A673 (cell line): ENCODE measurements at regions of chr11 and their contacts with region 1.

Region 1: DNA sequence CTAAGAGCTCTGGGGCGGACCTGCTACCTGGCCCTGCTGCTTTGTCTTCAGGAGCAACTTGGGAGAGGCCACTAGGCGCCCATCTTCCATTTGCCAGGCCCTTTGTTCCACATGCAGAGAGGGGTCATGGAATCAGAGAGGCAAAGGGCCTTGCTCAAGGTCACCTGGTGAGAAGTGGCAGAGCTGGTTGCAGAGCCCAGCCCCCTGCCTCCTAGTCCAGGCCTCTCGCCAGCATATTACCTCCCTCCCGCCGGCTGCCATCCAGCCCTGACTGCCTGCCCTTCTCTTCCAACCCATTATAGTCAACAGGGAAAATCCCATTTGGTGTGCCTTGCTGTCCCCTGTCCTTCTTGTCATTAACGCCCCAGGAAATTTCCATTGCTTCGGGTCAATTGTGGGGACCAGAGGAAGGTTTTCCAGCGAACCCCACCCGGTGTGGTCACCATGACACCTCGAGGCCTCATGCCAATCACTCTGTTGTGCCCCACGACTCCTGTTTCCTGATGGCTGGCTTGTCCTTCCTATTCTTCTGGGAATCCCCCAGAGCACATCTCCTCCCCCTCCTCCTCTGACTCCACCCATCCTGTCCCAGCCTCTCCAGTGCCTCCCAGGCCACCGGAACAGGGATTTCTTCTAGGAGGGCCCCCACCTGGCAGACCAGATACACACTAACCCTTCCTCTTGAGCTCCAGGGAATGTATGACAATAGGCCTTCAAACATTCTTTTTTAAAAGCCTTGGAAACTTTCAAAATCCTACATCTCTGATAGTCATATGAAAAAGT is 77.0 kb downstream of the NECTIN1 start:
- DNase-seq: no peak
- H3K4me3 ChIP-seq: no peak overlapping the region
- H3K27ac ChIP-seq: no peak overlapping the region
- H3K4me1 ChIP-seq: no peaks in the 10 kb centered on the region
- H3K27me3 ChIP-seq: no peaks in the 10 kb centered on the region
- CTCF ChIP-seq: no peak

Region 2: DNA sequence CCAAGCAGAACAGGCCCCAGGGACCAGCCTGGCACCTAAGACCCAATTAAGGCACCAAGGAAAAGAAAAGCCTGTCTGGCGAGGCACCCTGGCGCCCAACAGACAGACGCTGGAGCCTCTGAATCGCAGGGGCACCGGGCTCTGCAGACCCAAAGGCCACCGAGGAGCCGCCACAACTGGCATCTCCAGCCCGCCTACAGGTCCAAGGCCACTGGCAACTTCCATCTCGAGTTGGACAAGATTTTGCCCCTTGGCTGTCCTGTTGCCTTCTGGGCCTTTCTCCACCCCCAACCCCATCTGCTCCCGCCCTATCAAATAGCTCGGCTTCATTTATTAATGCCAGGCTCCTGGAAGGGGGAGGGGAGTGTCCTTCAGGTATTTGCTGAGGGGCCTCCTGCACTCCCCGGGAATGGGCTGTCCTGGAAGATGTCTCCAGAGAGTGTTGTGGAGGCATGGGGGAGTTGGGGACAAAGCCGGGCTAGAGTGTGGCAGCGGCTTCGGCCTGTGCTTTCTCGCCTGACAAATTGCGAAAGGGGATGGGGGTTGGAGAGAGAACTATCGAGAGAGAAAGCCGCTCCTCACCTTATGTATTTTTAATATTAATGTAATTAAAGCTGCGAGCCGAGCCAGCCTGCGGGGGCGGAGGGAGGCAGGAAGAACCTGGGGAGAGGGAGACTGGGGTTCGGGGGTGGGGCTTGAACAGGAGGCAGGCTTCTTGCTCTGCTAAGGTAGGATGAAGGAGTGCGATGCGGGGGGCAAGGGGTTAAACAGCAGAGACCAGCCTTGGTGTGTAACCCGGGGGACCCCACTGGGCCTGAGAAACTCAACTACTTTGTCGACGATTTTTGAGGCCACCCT is 1857.0 kb before region 1 on chr11:
- CTCF ChIA-PET with region 1: no interaction called
- POLR2A ChIA-PET with region 1: interaction called, 10 read pairs
- intact Hi-C with region 1: no loop called
- DNase-seq: no peak
- H3K4me3 ChIP-seq: no peak overlapping the region
- H3K27ac ChIP-seq: no peak overlapping the region
- H3K4me1 ChIP-seq: peaks cover 3% of the 10 kb centered on the region
- H3K27me3 ChIP-seq: peaks cover 68% of the 10 kb centered on the region
- CTCF ChIP-seq: no peak

Region 3: GRCh38 chr11:117907251-117907981 is 1744.6 kb before region 1 on chr11:
- CTCF ChIA-PET with region 1: interaction called, 10 read pairs
- POLR2A ChIA-PET with region 1: no interaction called
- intact Hi-C with region 1: no loop called
- DNase-seq: peak; percentile 98
- H3K4me3 ChIP-seq: peak overlapping the region; percentile 44
- H3K27ac ChIP-seq: peak overlapping the region; percentile 87
- H3K4me1 ChIP-seq: peaks cover 18% of the 10 kb centered on the region
- H3K27me3 ChIP-seq: no peaks in the 10 kb centered on the region
- CTCF ChIP-seq: no peak

Region 4: DNA sequence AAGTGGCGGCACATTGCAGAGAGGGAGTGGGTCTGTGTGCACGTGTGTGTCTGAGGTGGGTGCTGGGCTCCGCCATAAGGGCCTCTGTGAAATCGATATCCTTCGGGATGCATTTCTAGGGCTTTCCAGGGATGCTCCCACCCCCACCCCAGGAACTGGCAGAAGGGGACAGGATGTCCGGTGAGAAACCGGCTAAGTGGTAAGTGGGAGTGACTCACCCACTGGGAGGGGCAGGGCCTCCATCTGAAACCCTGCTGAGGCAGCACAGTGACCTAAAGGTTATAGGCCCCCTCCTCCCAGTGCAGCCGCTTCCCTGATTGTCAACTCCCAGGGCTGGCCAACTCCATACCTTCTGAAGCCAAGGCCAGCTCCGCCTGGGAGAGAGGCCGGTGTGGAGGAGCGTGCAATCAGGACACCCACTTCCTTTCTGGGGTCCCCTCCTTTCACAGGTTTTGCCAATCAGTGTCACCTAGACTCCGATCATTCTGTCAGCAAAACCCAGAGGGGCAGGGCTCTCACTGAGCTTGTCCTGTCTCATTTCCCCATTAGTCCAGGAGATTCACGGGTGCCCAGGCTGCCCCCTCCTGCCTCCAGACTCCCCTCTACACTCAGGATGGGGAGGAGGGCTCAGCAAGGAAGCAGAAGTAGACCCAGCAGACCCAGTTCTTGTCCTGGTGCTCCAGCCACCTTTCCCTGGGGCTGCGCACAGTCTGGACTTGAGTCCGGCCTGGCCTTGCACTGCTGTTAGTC is 32.5 kb after region 1 on chr11:
- CTCF ChIA-PET with region 1: no interaction called
- POLR2A ChIA-PET with region 1: no interaction called
- intact Hi-C with region 1: no loop called
- DNase-seq: no peak
- H3K4me3 ChIP-seq: no peak overlapping the region
- H3K27ac ChIP-seq: no peak overlapping the region
- H3K4me1 ChIP-seq: no peaks in the 10 kb centered on the region
- H3K27me3 ChIP-seq: no peaks in the 10 kb centered on the region
- CTCF ChIP-seq: no peak